ENCODE measurements at regions of chr19 and their contacts with region 1.

Region 1: DNA sequence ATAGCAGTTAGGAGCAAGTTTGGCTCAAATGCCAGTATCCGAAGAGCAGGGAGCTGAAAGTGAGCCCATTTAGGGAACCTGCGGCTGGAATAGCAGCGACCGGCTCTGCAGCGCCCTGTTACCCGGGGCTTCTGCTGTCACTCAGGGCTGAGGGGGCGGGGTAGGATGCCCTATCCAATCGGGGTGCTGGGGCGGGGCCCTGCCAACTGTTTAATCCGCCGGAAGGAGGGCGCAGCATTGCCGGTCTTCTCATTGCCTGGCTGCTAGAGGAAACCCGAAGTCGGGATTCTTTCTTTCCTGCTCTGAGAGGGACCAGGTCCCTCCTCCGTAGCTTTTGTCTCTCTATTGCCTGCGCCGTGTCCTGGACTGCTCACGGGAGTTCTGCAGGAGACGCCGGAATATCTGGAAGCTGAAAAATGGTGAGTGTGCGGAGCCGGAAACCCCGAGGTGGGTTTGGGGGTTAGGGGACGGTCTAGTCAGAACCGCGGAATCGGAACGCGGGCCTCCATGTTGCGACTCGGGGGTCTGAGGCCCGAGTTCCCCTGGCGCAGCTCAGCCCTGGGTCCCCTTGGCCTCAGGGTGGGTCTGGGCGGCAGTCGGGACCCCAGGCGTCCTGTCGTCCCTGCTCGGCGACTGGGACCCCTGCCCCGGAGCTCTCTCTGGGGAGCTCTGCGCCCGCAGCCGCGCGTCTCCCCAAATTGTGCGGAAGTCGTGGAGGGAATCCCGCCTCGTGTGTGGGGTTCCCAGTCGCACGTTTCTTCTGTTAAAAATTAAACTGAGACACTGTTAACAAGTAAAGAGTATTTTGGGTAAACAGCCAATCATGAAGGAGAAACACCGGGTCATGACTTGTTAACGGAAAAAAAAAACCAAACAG is 22.8 kb downstream of the ZNF763 start:
- DNase-seq: peak; percentile 92
- CTCF ChIP-seq: no peak

Region 2: DNA sequence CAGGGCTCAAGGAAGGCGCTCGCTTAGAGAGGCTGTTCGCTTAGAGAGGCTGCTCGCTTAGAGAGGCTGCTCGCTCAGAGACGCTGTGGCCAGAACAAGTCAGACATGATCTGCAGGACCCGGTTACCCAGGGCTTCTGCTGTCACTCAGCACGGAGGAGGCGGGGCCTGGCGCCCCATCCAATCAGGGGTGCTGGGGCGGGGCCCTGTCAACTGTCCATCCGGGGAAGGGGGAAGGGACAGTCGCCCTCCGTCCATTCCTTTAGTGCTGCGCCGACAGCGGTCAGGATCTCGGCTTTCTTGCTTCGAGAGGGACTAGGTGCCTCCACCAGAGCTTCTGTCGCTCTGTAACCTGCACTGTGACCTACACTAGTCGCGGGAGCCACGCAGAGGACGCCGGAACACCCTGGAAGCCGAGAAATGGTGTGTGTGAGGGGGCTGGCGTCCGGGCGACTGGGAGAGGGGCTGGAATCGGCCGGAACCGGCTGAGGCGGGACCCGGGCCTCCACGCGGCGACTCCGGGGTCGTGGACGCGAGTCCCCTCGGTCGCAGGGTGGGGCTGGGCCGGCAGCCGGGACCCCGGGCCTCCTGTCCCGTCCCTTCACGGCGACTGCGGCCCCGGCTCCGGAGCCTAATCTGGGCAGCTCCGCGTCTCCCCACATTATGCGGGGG is 173.5 kb before region 1 on chr19 and contains the start of gene ZNF440:
- CTCF ChIA-PET with region 1: interaction called, 12 read pairs
- POLR2A ChIA-PET with region 1: no interaction called
- DNase-seq: peak; percentile 97
- CTCF ChIP-seq: no peak

Region 3: GRCh38 chr19:11882606-11883005 is 105.0 kb before region 1 on chr19:
- CTCF ChIA-PET with region 1: interaction called, 12 read pairs
- POLR2A ChIA-PET with region 1: no interaction called
- DNase-seq: no peak
- CTCF ChIP-seq: no peak

Region 4: GRCh38 chr19:11964858-11965645 is 22.6 kb before region 1 on chr19 and contains the start of gene ZNF763:
- CTCF ChIA-PET with region 1: interaction called, 111 read pairs
- POLR2A ChIA-PET with region 1: interaction called, 12 read pairs
- DNase-seq: peak; percentile 92
- CTCF ChIP-seq: no peak

Region 5: DNA sequence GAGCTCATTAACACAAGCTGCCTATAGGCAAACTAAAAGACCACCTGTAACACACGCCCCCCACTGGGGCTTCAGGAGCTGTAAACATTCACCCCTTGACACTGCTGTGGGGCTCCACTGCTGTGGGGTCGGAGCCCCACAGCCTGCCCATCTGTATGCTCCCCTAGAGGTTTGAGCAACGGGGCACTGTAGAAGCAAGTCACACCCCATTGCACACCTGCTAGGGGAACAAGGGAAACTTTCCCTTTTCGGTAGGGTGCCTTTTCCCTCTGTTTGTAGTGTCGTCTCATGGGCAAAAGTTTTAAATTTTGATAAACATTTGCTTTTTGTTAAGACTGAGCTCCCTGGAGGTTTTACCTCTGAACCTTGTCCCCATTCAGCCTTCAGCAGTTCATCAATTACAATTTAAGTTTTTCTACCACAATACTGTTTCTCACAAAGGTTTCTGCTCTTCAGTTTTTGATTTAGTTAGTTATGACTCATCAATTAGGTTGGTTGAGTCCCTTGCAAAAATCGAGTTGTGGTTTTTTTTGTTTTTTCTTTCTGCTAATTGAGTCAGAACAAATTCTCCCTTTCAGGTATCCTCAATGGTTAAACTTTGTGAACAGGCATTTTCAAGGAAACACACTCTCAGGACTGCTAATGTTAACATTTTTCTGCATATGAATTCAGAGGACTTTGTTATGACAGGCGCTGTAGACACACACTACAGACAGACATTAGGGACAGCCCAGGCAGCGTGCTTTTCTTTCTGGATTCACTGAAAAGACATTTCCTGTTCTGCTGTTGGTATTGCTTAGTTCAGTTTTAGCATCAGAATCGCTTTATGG is 12.7 kb after region 1 on chr19:
- CTCF ChIA-PET with region 1: interaction called, 43 read pairs
- POLR2A ChIA-PET with region 1: interaction called, 7 read pairs
- DNase-seq: peak; percentile 72
- CTCF ChIP-seq: no peak

Region 6: DNA sequence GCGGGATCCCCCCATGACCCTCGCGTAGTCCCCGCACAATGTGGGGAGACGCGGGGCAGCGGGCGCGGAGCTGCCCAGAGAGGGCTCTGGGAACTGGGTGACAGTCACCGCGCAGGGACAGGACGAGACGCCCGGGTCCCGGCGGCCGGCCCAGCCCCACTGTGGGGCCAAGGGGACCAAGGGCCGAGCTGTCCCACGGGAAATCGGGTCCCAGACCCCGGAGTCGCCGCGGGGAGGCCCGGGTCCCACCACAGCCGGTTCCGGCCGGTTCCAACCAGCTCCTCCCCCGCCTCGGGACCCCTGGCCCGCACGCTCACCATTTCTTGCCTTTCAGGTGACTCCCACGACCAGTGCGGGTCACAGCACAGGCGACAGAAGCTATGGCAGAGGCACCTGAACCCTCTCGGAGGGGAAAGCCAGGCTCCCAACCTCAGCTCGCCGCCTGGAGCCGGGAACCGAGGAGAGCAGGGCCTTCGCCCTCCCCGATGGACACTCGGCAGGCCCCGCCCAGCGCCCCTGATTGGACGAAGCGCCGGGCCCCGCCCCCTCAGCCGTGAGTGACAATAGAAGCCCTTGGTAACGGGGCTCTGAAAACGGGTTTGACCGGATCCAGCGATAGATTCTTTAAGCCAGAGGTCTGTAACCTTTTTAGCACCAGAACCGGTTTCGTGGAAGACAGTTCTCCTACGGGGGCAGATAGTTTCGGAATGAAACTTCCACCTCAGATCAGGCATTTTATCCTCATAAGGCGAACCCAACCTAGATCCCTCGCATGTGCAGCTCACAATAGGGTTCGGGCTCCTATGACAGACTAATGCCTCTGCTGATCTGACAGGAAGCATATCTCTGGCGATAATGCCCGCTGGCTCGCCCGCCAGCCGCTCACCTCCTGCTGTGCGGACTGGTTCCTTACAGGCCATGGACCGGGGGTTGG is 47.8 kb after region 1 on chr19 and contains the start of gene ZNF433:
- CTCF ChIA-PET with region 1: interaction called, 13 read pairs
- POLR2A ChIA-PET with region 1: interaction called, 18 read pairs
- DNase-seq: peak; percentile 93
- CTCF ChIP-seq: no peak

Region 7: GRCh38 chr19:12139885-12140547 is 152.4 kb after region 1 on chr19 and contains the start of gene ZNF20:
- CTCF ChIA-PET with region 1: interaction called, 13 read pairs
- POLR2A ChIA-PET with region 1: interaction called, 5 read pairs
- DNase-seq: peak; percentile 96
- CTCF ChIP-seq: peak; percentile 5